Heart right ventricle (tissue), 16 donors: ENCODE measurements at regions of chr6 and their contacts with region 1.

Region 1: GRCh38 chr6:93699332-93699731 is 280.0 kb upstream of the EPHA7 start:
- DNase-seq: no peak
- ATAC-seq: no peak
- H3K4me3 ChIP-seq: no peak overlapping the region
- H3K27ac ChIP-seq: no peak overlapping the region
- H3K4me1 ChIP-seq: no peaks in the 10 kb centered on the region
- H3K27me3 ChIP-seq: no peaks in the 10 kb centered on the region
- CTCF ChIP-seq: no peak

Region 2: DNA sequence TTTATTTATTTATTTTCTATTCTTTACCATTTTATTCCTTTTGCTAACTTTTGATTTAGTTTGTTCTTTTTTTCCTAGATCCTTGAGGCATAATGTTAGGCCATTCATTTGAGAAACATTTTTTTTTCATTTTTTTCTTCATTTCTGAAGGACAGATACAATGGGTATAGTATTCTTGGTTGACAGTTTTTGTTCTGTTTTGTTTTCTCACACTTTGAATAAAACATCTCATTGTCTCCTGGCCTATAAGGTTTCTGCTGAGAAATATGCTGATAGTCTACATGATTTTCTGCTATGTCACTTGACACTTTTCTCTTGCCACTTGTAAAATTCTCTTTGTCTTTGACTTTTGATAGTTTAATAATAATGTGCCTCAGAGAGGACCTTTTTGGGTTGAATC is 14.6 kb after region 1 on chr6:
- intact Hi-C with region 1: loop called in 1 of 10 experiments (anchors 2 kb)
- DNase-seq: no peak
- ATAC-seq: no peak
- H3K4me3 ChIP-seq: no peak overlapping the region
- H3K27ac ChIP-seq: no peak overlapping the region
- H3K4me1 ChIP-seq: no peaks in the 10 kb centered on the region
- H3K27me3 ChIP-seq: no peaks in the 10 kb centered on the region
- CTCF ChIP-seq: no peak

Region 3: DNA sequence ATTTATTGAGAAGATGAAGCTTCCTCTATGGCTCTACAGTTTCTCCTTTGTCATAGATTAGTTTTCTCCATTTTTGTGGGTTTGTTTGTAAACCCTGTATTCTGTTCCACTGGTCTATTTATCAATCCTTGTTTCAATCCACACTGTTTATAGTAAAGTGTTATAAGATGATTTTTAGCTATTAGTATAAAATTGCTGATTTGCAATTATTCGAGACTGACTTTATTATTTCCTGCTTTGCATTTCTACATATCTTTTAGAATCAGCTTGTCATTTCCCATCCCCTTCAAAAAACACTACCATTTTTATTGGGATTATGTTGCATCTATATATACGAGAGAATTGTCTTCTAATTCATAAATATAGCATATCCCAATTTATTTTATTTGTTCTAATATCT is 46.0 kb after region 1 on chr6:
- intact Hi-C with region 1: no loop called
- DNase-seq: no peak
- ATAC-seq: no peak
- H3K4me3 ChIP-seq: no peak overlapping the region
- H3K27ac ChIP-seq: no peak overlapping the region
- H3K4me1 ChIP-seq: no peaks in the 10 kb centered on the region
- H3K27me3 ChIP-seq: no peaks in the 10 kb centered on the region
- CTCF ChIP-seq: no peak